CD14-positive monocyte (primary cell): ENCODE measurements at regions of chr3 and their contacts with region 1.

Region 1: GRCh38 chr3:129226357-129226756 is 23.0 kb upstream of the COPG1 start:
- DNase-seq: peak; percentile 84 to 92 (median 86)
- H3K4me3 ChIP-seq: no peak overlapping the region
- H3K4me3 Mint-ChIP-seq: peak overlapping the region in 1 of 2 donors; percentile 21
- H3K27ac ChIP-seq: peak overlapping the region; percentile 97 to 100
- H3K27ac Mint-ChIP-seq: peak overlapping the region; percentile 98 to 100 (median 99)
- H3K4me1 ChIP-seq: peaks cover 75 to 83% of the 10 kb centered on the region in 2 donors
- H3K4me1 Mint-ChIP-seq: peaks cover 67% of the 10 kb centered on the region
- H3K27me3 ChIP-seq: no peaks in the 10 kb centered on the region
- H3K27me3 Mint-ChIP-seq: peaks cover 0 to 2% (median 0%) of the 10 kb centered on the region in 3 donors
- CTCF ChIP-seq: no peak

Region 2: GRCh38 chr3:129238945-129239706 is 12.8 kb after region 1 on chr3:
- intact Hi-C with region 1: loop called in 1 of 2 experiments (anchors 2 kb)
- DNase-seq: peak; percentile 90 to 95 (median 92)
- H3K4me3 ChIP-seq: peak overlapping the region in 1 of 3 experiments; percentile 27
- H3K4me3 Mint-ChIP-seq: peak overlapping the region; percentile 16 to 74
- H3K27ac ChIP-seq: peak overlapping the region; percentile 95 to 99
- H3K27ac Mint-ChIP-seq: peak overlapping the region; percentile 98 to 100 (median 99)
- H3K4me1 ChIP-seq: peaks cover 60 to 67% of the 10 kb centered on the region in 2 donors
- H3K4me1 Mint-ChIP-seq: peaks cover 54% of the 10 kb centered on the region
- H3K27me3 ChIP-seq: no peaks in the 10 kb centered on the region
- H3K27me3 Mint-ChIP-seq: peaks cover 0 to under 1% (median 0%) of the 10 kb centered on the region in 3 donors
- CTCF ChIP-seq: peak; percentile 34